PC-9 (cell line): ENCODE measurements at regions of chr18 and their contacts with region 1.

Region 1: DNA sequence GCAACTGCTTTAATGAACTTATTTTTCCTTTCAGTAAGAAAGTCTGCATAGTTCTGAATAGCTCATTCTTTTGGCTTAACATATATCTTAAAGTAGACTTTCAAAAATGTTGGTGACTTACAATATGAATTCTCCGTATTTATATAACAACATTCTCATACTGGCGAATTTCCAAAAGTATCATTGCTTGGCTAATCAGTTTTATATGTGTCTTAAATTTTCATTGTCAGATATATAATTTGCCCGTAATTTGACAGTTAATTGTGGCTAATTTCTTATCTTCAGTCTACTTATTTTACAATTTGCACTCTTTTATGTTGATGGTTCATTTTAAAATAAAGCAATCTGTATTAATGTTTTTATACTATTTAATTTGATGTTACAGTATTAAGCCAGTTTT is 144.9 kb downstream of the ATP9B start:
- DNase-seq: no peak
- H3K4me3 ChIP-seq: no peak overlapping the region
- H3K27ac ChIP-seq: no peak overlapping the region
- H3K4me1 ChIP-seq: peaks cover 7% of the 10 kb centered on the region; the same call in 1 of the 2 replicates
- H3K27me3 ChIP-seq: no peaks in the 10 kb centered on the region
- CTCF ChIP-seq: no peak

Region 2: DNA sequence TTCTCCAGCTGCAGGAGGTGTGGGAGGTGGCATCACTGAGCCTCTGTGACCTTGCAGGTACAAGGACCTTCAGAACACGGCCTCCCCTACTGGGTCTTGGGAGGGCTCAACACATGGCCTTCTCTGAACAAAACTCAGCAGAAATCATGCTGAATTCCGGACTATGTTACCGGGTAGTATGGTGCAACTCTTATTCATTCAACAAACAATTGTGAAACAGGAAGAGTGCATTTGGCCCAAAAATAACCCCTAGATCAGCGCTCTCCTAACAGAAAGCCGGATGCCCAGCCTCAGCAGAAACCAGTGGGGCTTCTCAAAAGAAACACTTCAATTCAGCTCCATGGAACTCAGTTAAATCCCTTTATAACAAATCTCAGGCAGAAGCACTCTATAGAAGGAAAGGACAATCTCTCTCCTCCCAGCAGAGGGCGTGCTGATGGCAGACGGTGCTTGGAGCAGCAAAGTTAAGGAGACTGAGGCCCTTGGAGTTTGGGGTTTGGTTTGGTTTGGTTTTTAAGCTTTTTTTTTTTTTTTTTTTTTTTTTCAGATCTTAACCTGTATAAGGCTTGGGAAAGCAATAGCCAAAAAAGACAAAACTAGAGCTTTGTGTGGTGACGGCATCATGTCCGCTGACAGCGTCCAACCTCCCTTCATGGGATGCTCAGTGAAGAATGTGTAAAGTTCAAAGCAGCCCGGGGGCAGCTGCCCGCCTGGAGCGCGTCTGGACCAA is 338.6 kb before region 1 on chr18:
- CTCF ChIA-PET with region 1: interaction called, 23 read pairs
- POLR2A ChIA-PET with region 1: no interaction called
- intact Hi-C with region 1: no loop called
- DNase-seq: peak in 1 of 2 experiments; percentile 5
- H3K4me3 ChIP-seq: no peak overlapping the region
- H3K27ac ChIP-seq: no peak overlapping the region
- H3K4me1 ChIP-seq: no peaks in the 10 kb centered on the region
- H3K27me3 ChIP-seq: peaks cover 71% of the 10 kb centered on the region
- CTCF ChIP-seq: peak; percentile 62